ENCODE measurements at regions of chr5 and their contacts with region 1.

Region 1: DNA sequence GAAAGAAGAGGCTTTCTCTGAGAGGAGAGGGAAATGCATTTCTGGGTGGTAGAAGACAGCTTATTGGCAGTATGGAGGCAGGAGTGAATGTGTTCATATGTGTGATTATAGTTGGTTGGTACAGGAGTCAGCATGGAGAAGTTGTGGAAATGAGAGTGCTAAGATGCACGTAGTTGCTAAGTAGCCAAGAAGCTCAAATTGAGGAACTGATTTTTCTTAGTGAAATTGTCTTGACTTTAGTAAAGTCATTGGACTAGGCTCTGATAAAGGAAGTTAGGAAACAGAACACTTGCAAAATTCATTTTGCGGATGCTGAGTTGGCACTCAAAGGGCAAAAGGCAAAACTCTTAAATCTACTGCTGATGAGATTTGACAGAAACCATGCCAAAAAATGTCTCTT is 158.9 kb upstream of the VCAN start:
- DNase-seq: peak; percentile 89 to 98 (median 94)
- H3K4me3 ChIP-seq: peak overlapping the region in 1 of 3 experiments; percentile 32
- H3K4me3 Mint-ChIP-seq: no peak overlapping the region
- H3K27ac ChIP-seq: peak overlapping the region; percentile 31 to 86
- H3K27ac Mint-ChIP-seq: peak overlapping the region; percentile 91 to 98 (median 95)
- H3K4me1 ChIP-seq: peaks cover 37 to 51% of the 10 kb centered on the region in 2 donors
- H3K4me1 Mint-ChIP-seq: peaks cover 34% of the 10 kb centered on the region
- H3K27me3 ChIP-seq: no peaks in the 10 kb centered on the region
- H3K27me3 Mint-ChIP-seq: no peaks in the 10 kb centered on the region
- CTCF ChIP-seq: no peak

Region 2: DNA sequence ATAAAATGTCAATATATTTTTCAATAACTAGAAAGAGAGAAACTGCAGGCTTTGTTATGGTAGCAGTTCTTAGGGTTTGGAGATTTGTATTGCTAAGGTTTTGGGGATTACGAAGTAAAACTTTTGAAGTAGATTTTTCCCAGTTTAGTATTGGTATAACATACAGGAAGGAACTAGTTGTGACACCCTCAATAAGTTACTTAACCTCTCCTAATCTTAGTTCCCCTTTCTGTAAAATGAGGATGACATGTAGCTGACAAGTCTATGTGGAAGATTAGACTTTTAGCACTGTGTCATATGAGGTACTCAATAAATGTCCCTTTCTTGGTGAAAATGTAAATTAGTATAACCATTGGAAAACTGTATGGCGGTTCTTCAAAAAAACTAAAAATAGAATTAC is 1414.3 kb before region 1 on chr5:
- intact Hi-C with region 1: loop called in 1 of 2 experiments (anchors 10 kb)
- DNase-seq: peak; percentile 64 to 93 (median 89)
- H3K4me3 ChIP-seq: peak overlapping the region in 1 of 3 experiments; percentile 53
- H3K4me3 Mint-ChIP-seq: peak overlapping the region in 1 of 2 donors; percentile 71
- H3K27ac ChIP-seq: peak overlapping the region in 1 of 2 donors; percentile 91
- H3K27ac Mint-ChIP-seq: peak overlapping the region; percentile 83 to 94 (median 87)
- H3K4me1 ChIP-seq: peaks cover 51 to 58% of the 10 kb centered on the region in 2 donors
- H3K4me1 Mint-ChIP-seq: peaks cover 46% of the 10 kb centered on the region
- H3K27me3 ChIP-seq: no peaks in the 10 kb centered on the region
- H3K27me3 Mint-ChIP-seq: no peaks in the 10 kb centered on the region
- CTCF ChIP-seq: no peak

Region 3: DNA sequence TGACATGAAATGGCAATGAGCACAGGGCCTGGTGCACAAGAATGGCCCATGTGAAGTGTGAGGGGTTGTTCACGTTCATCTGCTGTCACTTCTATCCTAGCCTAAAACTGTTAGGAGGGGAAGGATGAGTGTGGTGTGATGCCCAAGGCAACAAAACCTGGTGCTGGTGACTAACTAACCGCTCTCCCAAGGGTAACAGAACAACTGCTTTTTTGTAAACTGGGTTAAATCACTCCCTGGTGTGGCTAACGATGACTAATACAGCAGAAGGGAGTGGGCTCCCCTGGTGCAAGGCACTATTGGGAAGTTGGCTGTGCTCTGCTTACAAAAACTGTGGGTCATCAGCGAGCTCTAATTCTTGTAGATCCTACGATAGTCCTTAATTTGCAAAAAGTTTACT is 55.7 kb after region 1 on chr5:
- intact Hi-C with region 1: loop called (anchors 5 kb)
- DNase-seq: peak; percentile 95 to 98 (median 98)
- H3K4me3 ChIP-seq: peak overlapping the region in 1 of 3 experiments; percentile 60
- H3K4me3 Mint-ChIP-seq: peak overlapping the region; percentile 17 to 67
- H3K27ac ChIP-seq: peak overlapping the region; percentile 93 to 99
- H3K27ac Mint-ChIP-seq: peak overlapping the region; percentile 94 to 99 (median 97)
- H3K4me1 ChIP-seq: peaks cover 71 to 79% of the 10 kb centered on the region in 2 donors
- H3K4me1 Mint-ChIP-seq: peaks cover 62% of the 10 kb centered on the region
- H3K27me3 ChIP-seq: no peaks in the 10 kb centered on the region
- H3K27me3 Mint-ChIP-seq: peaks cover 0 to 3% (median 0%) of the 10 kb centered on the region in 3 donors
- CTCF ChIP-seq: no peak

Region 4: GRCh38 chr5:83374547-83374946 is 61.9 kb after region 1 on chr5:
- intact Hi-C with region 1: loop called (anchors 5 kb)
- DNase-seq: peak; percentile 40 to 50 (median 49)
- H3K4me3 ChIP-seq: no peak overlapping the region
- H3K4me3 Mint-ChIP-seq: no peak overlapping the region
- H3K27ac ChIP-seq: peak overlapping the region in 1 of 2 donors; percentile 80
- H3K27ac Mint-ChIP-seq: peak overlapping the region; percentile 82 to 96 (median 92)
- H3K4me1 ChIP-seq: peaks cover 72 to 75% of the 10 kb centered on the region in 2 donors
- H3K4me1 Mint-ChIP-seq: peaks cover 68% of the 10 kb centered on the region
- H3K27me3 ChIP-seq: no peaks in the 10 kb centered on the region
- H3K27me3 Mint-ChIP-seq: peaks cover 0 to 2% (median 0%) of the 10 kb centered on the region in 3 donors
- CTCF ChIP-seq: no peak